Right lobe of liver (tissue), 6 donors: ENCODE measurements at regions of chr3 and their contacts with region 1.

Region 1: DNA sequence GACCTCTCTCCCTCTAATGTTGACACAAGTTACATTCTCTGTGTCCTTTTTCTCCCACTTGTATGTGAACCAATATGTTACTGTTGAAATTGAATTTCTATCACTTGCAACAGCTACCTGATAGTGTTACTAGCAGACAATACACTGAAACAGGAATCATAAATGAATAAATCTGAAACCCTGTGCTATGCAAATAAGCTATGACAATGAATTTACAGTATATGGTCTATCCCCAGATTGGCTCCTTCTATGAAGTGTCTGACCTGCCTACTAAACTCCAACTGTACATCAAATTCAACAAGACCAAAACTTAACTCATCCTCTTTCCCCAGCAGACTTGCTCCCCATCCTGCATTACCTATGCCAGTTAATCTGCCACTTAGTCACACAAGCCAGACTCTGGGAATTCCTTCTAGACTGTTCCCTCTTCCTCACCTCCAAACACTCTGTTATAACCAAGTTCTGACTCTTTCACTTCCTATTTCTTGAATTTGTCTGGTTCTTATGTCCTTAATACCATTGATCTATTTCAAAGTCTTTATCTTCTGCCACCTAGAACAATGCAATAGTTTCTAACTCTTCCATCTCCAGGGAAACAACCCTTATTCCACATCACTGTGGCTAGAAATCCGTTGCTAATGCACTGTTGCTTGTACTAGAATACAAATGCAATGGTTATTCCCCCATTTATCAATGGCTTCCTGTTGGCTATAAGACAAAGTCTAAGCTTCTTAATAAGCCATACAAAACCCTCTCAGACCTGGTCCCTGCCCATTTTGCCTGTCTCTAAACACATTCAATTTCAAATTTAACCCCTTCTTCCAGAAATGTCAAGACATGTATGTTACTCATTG is 13.4 kb upstream of the ZNF639 start:
- DNase-seq: no peak
- ATAC-seq: no peak
- H3K4me3 ChIP-seq: no peak overlapping the region
- H3K27ac ChIP-seq: no peak overlapping the region
- H3K4me1 ChIP-seq: no peaks in the 10 kb centered on the region
- H3K27me3 ChIP-seq: no peaks in the 10 kb centered on the region
- CTCF ChIP-seq: no peak
- POLR2A ChIP-seq: no peak

Region 2: GRCh38 chr3:179015551-179016020 is 293.9 kb before region 1 on chr3:
- intact Hi-C with region 1: loop called in 1 of 2 experiments (anchors 10 kb)
- DNase-seq: no peak
- ATAC-seq: peak; percentile 94 to 97 (median 96)
- H3K4me3 ChIP-seq: no peak overlapping the region
- H3K27ac ChIP-seq: no peak overlapping the region
- H3K4me1 ChIP-seq: no peaks in the 10 kb centered on the region
- H3K27me3 ChIP-seq: no peaks in the 10 kb centered on the region
- CTCF ChIP-seq: peak; percentile 80 to 93 (median 87)
- POLR2A ChIP-seq: no peak